Activated naive CD4-positive, alpha-beta T cell treated with anti-CD3 and anti-CD28 coated beads, Interleukin-2, amount 10 ng/mL, durations not matched to agents 7 days and 5 days (primary cell): ENCODE measurements at regions of chrX and their contacts with region 1.

Region 1: GRCh38 chrX:13487731-13488523 is 81.5 kb upstream of the EGFL6 start:
- DNase-seq: peak; percentile 57
- H3K4me3 Mint-ChIP-seq: no peak overlapping the region
- H3K27ac Mint-ChIP-seq: peak overlapping the region; percentile 81
- H3K4me1 Mint-ChIP-seq: peaks cover 27% of the 10 kb centered on the region
- H3K27me3 Mint-ChIP-seq: peaks cover 4% of the 10 kb centered on the region

Region 2: GRCh38 chrX:13087322-13088155 is 400.4 kb before region 1 on chrX:
- CTCF ChIA-PET with region 1: interaction called, 50 read pairs
- DNase-seq: peak; percentile 72
- H3K4me3 Mint-ChIP-seq: peak overlapping the region; percentile 81
- H3K27ac Mint-ChIP-seq: peak overlapping the region; percentile 97
- H3K4me1 Mint-ChIP-seq: peaks cover 93% of the 10 kb centered on the region
- H3K27me3 Mint-ChIP-seq: no peaks in the 10 kb centered on the region